ENCODE measurements at regions of chr16 and their contacts with region 1.

Region 1: GRCh38 chr16:21501909-21502667 is 97.3 kb upstream of the METTL9 start:
- DNase-seq: peak; percentile 92
- H3K4me3 Mint-ChIP-seq: peak overlapping the region; percentile 81
- H3K27ac Mint-ChIP-seq: peak overlapping the region; percentile 92
- H3K4me1 Mint-ChIP-seq: peaks cover 19% of the 10 kb centered on the region
- H3K27me3 Mint-ChIP-seq: no peaks in the 10 kb centered on the region

Region 2: DNA sequence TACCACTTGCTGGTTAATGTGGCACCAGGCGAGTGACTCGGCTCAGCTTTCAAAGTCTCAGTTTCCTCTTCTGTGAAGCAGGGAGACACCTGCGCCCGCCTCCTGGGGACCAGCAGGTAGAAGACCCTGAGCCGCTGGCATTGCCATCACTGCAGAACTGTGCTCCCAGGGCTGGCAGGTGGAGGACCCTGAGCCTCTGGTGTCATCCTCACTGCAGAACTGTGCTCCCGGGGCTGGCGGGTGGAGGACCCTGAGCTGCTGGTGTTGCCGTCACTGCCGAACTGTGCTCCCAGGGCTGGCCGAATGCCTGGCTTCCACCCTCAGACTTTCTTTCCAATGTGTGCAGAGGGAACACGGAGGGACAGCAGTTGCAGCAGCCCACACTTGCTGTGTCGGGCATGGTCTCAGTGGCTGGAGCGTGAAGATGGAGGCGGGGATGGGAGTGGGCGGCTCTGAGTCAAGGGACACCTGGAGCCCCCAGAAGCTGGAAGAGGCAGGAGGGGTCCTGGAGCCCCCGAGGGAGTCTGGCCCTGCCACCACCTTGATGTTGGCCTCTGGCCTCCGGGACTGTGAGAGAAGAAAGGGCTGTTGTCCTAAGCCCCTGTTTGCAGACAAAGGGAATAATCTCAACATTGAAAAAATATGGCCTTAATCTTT is 21.5 kb after region 1 on chr16:
- CTCF ChIA-PET with region 1: interaction called, 8 read pairs
- POLR2A ChIA-PET with region 1: interaction called, 24 read pairs
- DNase-seq: no peak
- H3K4me3 Mint-ChIP-seq: no peak overlapping the region
- H3K27ac Mint-ChIP-seq: no peak overlapping the region
- H3K4me1 Mint-ChIP-seq: no peaks in the 10 kb centered on the region
- H3K27me3 Mint-ChIP-seq: peaks cover 2% of the 10 kb centered on the region